B cell (primary cell): ENCODE measurements at regions of chr22 and their contacts with region 1.

Region 1: GRCh38 chr22:40990430-40990829 is 39.3 kb downstream of the RBX1 start:
- DNase-seq: no peak
- ATAC-seq: no peak
- H3K4me3 ChIP-seq: no peak overlapping the region
- H3K4me3 Mint-ChIP-seq: no peak overlapping the region
- H3K27ac ChIP-seq: no peak overlapping the region
- H3K27ac Mint-ChIP-seq: no peak overlapping the region
- H3K4me1 ChIP-seq: no peaks in the 10 kb centered on the region
- H3K4me1 Mint-ChIP-seq: no peaks in the 10 kb centered on the region
- H3K27me3 ChIP-seq: peaks cover 0 to 6% (median 0%) of the 10 kb centered on the region in 4 experiments
- H3K27me3 Mint-ChIP-seq: peaks cover 32% of the 10 kb centered on the region
- CTCF ChIP-seq: no peak

Region 2: DNA sequence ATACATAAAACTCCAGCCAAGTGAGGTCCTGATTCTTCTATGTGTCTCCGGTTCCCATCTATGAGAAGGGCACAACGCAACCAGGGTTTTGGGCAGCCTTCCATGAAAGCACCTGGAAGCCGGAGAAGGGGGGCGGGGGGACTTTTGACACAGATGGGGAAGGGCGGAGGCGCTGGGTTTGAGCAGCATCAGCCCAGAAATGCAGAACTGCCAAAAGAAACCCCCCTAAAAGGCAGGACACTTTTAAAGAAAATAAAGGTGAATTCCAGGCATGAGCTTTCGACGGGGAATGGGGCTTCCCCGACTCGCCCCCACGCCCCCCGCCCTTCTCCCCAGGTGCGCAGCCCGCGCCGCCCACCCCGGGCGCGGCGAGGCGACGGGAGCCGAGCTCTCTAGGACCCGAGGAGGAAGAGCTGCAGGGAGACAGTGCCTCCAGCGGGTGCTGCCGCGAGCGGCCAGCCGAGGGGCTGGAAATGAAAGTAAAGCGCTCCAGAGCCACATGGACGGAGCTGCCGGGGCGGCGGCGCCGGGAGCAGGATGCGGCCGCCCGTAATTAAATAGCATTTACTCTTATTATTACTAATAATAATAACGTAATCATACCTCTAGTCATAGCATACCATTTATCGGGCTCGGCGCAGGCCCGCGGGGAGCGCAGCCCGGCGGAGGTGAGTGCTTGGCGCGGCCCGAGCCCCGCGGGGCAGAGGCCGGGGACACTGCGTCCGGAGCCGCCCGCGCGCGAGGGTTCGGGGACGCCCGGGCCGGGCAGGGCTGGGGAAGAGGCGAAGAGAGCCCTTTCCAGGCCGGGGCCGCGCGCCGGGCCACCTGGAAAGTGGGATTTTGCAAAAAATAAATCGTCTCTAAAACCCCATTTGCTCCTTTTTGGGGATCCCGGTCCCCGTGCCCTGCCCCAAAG is 310.9 kb after region 1 on chr22 and contains the start of gene ZC3H7B:
- CTCF ChIA-PET with region 1: no interaction called
- POLR2A ChIA-PET with region 1: interaction called, 11 read pairs
- intact Hi-C with region 1: no loop called
- DNase-seq: peak; percentile 94
- ATAC-seq: peak; percentile 92
- H3K4me3 ChIP-seq: peak within 1 kb of the TSS; percentile 59 to 95 (median 86)
- H3K4me3 Mint-ChIP-seq: peak within 1 kb of the TSS; percentile 86
- H3K27ac ChIP-seq: peak within 1 kb of the TSS; percentile 73 to 84
- H3K27ac Mint-ChIP-seq: peak within 1 kb of the TSS; percentile 75
- H3K4me1 ChIP-seq: peaks cover 13 to 17% of the 10 kb centered on the region in 2 donors
- H3K4me1 Mint-ChIP-seq: peaks cover 28% of the 10 kb centered on the region
- H3K27me3 ChIP-seq: no peaks in the 10 kb centered on the region
- H3K27me3 Mint-ChIP-seq: no peaks in the 10 kb centered on the region
- CTCF ChIP-seq: peak; percentile 51
- total RNA-seq, gene ZC3H7B: 41.9 and 42.2 TPM in 2 replicates